ENCODE measurements at regions of chr13 and their contacts with region 1.

Region 1: DNA sequence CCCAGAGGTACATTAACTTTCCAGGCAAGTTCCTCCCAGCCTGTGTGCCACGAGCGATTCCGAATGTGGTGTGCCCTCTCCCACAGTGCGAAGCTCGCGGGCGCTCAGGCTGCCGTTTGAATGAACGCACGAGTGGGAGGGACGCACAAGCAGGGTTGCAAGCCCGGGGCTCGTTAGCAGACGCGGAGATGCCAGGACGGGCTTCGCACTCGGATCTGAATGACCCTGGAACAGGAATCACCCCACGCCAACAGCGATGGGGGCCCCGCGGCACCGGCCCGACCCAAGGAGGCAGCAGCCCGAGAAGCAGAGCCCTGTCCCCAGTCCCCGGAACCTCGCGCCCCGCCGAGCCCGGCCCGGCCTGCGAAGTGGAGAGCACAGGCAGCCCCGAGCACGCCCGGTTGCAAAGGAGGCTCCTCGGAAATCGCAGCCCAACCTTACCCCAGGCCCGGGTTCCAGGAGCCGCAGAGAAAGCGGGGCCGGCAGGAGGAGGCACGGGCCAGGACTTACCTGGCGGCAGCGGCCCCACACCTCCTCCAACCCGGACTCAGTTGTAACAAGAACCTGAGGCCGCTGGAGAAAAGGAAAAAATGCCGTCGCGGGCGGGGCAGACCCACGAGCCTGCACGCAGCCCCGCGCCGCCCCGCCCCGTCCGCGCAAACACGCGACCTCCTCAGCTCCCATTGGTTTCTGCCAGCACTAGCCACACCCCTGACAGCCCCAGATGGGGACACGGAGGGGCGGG is at the start of gene SLC25A30:
- DNase-seq: peak; percentile 97 to 98
- ATAC-seq: peak; percentile 96
- H3K4me3 ChIP-seq: peak within 1 kb of the TSS; percentile 21 to 71
- H3K27ac ChIP-seq: peak within 1 kb of the TSS in 1 of 2 donors; percentile 56
- H3K4me1 ChIP-seq: no peaks in the 10 kb centered on the region
- H3K27me3 ChIP-seq: no peaks in the 10 kb centered on the region
- total RNA-seq, gene SLC25A30: 22.2 to 31.9 TPM

Region 2: DNA sequence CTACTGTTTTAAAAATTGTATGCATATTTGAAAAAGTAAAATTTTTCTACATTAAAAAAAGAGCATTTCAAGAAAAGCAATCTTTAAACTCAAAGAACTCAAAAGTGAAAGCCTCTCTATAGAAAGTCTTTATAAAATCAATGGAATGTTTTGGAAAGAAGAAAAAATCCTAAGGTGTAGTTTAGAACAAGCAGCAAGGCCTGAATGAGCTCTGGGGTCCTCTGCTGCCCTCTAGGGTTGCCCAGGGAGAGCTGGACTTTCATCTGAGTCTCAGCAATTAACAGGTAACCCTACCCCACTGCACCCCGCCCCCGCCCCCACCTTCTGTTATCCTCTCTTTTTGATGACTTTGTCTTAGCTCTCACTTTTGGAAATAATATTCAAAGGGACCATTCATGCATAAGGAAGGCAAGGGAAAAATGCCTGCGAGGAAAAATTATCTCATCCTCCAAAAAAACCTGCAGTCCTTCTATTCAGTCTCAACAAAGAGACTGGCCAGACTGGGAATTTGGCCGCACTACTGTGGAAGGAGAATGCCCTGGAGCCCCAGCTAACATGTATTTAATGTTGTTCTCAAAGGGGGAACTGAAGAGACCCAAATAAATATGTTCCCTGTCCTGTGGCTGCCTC is 23.9 kb before region 1 on chr13:
- intact Hi-C with region 1: no loop called
- DNase-seq: no peak
- ATAC-seq: no peak
- H3K4me3 ChIP-seq: no peak overlapping the region
- H3K27ac ChIP-seq: no peak overlapping the region
- H3K4me1 ChIP-seq: no peaks in the 10 kb centered on the region
- H3K27me3 ChIP-seq: no peaks in the 10 kb centered on the region

Region 3: GRCh38 chr13:45464687-45465453 is 46.9 kb after region 1 on chr13 and contains the start of gene COG3:
- intact Hi-C with region 1: loop called in 1 of 2 experiments (anchors 5 kb)
- DNase-seq: peak; percentile 95 to 98
- ATAC-seq: peak; percentile 99
- H3K4me3 ChIP-seq: peak within 1 kb of the TSS; percentile 63 to 92
- H3K27ac ChIP-seq: peak within 1 kb of the TSS; percentile 57 to 73
- H3K4me1 ChIP-seq: peaks cover 0 to 3% of the 10 kb centered on the region in 2 donors
- H3K27me3 ChIP-seq: no peaks in the 10 kb centered on the region
- total RNA-seq, gene COG3: 34.3 to 39.3 TPM

Region 4: DNA sequence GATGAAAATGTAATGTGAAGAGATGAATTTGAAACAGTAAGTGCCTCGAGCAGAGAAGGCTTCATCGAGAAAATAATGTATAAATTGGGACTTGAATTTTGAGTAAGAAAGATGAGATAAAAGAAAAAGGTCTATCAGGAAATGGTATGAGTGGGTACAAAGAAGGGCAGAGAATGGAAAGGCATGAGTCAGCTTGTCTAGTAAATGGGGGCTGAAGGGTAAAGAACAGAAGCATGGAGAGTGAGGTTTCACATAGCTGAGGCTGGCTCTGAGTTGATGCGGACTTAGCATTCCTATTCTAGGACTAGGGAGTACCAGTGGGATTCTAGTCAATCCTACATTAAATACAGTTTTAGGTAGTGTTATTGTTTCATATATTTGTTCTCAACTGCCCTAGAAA is 548.8 kb after region 1 on chr13:
- intact Hi-C with region 1: no loop called
- DNase-seq: no peak
- ATAC-seq: no peak
- H3K4me3 ChIP-seq: no peak overlapping the region
- H3K27ac ChIP-seq: no peak overlapping the region
- H3K4me1 ChIP-seq: no peaks in the 10 kb centered on the region
- H3K27me3 ChIP-seq: no peaks in the 10 kb centered on the region

Measured in aorta (tissue), 5 donors.